ENCODE measurements at regions of chr7 and their contacts with region 1.

Region 1: DNA sequence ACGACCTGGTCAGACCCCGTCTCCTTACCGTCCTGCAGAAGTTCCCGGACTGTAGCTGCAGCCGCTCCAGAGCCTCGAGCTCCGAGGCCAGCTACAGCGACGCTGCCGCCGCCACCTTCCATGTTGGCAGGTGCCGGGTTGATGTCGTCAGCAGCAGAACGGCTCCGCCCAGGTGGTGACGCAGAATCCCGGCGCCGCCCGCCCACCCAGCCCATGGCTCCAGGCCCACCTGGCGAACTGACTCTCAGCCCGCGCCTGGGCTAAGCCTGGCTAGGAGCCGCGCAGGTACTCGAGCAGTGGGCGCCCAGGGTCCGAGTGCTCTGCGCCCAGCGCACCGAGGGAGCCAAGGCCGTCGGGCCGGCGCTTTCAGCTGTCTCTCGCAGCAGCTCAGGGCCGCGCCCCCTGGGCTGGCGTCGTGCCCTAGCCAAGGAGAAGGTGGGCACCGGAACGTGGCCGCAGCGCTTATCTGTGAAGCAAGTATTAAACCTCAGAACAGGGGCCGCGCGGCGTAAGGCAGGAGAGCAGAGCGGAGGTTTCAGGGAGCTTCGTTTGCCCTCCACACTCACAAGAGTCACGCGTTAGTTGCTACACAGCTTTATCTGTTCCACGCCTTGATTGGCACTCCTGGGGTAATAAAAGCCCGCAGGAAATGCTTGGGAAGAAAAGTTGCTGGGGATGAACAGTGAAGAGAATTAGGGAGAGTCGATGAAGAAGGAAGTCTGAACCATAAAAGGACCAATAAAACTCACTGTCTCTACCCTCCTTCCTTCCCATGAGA is at the starts of genes COG5 and DUS4L:
- DNase-seq: peak; percentile 69 to 94 (median 80)
- ATAC-seq: peak; percentile 85
- H3K4me3 ChIP-seq: peak within 1 kb of the TSS; percentile 83
- H3K4me3 Mint-ChIP-seq: peak within 1 kb of the TSS; percentile 93
- H3K27ac ChIP-seq: peak within 1 kb of the TSS; percentile 87 to 90
- H3K27ac Mint-ChIP-seq: peak within 1 kb of the TSS; percentile 94
- H3K4me1 ChIP-seq: peaks cover 35% of the 10 kb centered on the region
- H3K4me1 Mint-ChIP-seq: peaks cover 70% of the 10 kb centered on the region
- H3K27me3 ChIP-seq: no peaks in the 10 kb centered on the region
- H3K27me3 Mint-ChIP-seq: no peaks in the 10 kb centered on the region
- CTCF ChIP-seq: no peak
- total RNA-seq, gene COG5: 43.4 to 44.5 TPM
- total RNA-seq, gene DUS4L: 14.3 to 14.4 TPM

Region 2: GRCh38 chr7:106865130-106866041 is 698.6 kb before region 1 on chr7 and contains the start of gene PIK3CG:
- CTCF ChIA-PET with region 1: no interaction called
- POLR2A ChIA-PET with region 1: interaction called, 4 read pairs
- intact Hi-C with region 1: loop called in 1 of 2 experiments (anchors 10 kb)
- DNase-seq: peak in 5 of 14 experiments; percentile 6 to 86 (median 75)
- ATAC-seq: peak; percentile 94
- H3K4me3 ChIP-seq: peak within 1 kb of the TSS; percentile 62
- H3K4me3 Mint-ChIP-seq: peak within 1 kb of the TSS; percentile 92
- H3K27ac ChIP-seq: peak within 1 kb of the TSS; percentile 77 to 80
- H3K27ac Mint-ChIP-seq: peak within 1 kb of the TSS; percentile 93
- H3K4me1 ChIP-seq: peaks cover 61% of the 10 kb centered on the region
- H3K4me1 Mint-ChIP-seq: peaks cover 82% of the 10 kb centered on the region
- H3K27me3 ChIP-seq: no peaks in the 10 kb centered on the region
- H3K27me3 Mint-ChIP-seq: no peaks in the 10 kb centered on the region
- CTCF ChIP-seq: no peak
- total RNA-seq, gene PIK3CG: 20.8 to 21.2 TPM

Region 3: DNA sequence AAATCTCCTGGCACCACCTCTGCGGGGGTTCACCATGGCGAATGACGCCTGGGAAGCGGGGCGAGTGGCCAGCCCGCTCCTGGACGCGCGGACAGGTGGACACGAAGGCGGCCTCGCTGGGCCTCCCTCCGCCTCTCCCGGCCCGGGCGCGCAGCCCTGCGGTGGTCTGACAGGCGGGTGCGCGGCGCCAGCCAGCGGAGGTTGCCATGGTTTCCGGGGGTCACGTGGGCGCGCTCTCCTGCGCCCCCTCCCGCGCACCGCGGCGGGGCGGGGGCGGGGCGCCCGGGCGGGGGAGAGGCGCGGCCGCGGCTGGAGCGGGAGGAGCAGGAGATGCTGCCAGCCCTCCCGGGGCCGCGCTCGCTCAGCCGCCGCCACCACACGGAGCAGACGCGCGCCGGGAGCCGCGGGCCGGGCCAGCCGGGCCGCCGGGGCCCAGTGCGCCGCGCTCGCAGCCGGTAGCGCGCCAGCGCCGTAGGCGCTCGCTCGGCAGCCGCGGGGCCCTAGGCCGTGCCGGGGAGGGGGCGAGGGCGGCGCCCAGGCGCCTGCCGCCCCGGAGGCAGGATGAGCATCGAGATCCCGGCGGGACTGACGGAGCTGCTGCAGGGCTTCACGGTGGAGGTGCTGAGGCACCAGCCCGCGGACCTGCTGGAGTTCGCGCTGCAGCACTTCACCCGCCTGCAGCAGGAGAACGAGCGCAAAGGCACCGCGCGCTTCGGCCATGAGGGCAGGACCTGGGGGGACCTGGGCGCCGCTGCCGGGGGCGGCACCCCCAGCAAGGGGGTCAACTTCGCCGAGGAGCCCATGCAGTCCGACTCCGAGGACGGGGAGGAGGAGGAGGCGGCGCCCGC is 519.4 kb before region 1 on chr7 and contains the start of gene PRKAR2B:
- CTCF ChIA-PET with region 1: no interaction called
- POLR2A ChIA-PET with region 1: no interaction called
- intact Hi-C with region 1: loop called in 1 of 2 experiments (anchors 10 kb)
- DNase-seq: peak; percentile 56 to 93 (median 71)
- ATAC-seq: peak; percentile 94
- H3K4me3 ChIP-seq: peak within 1 kb of the TSS; percentile 60
- H3K4me3 Mint-ChIP-seq: peak within 1 kb of the TSS; percentile 94
- H3K27ac ChIP-seq: no peak within 1 kb of the TSS
- H3K27ac Mint-ChIP-seq: peak within 1 kb of the TSS; percentile 39
- H3K4me1 ChIP-seq: peaks cover 10% of the 10 kb centered on the region
- H3K4me1 Mint-ChIP-seq: peaks cover 13% of the 10 kb centered on the region
- H3K27me3 ChIP-seq: peaks cover 12 to 30% of the 10 kb centered on the region in 2 experiments
- H3K27me3 Mint-ChIP-seq: peaks cover 43% of the 10 kb centered on the region
- CTCF ChIP-seq: no peak
- total RNA-seq, gene PRKAR2B: 0.41 to 0.42 TPM

Region 4: DNA sequence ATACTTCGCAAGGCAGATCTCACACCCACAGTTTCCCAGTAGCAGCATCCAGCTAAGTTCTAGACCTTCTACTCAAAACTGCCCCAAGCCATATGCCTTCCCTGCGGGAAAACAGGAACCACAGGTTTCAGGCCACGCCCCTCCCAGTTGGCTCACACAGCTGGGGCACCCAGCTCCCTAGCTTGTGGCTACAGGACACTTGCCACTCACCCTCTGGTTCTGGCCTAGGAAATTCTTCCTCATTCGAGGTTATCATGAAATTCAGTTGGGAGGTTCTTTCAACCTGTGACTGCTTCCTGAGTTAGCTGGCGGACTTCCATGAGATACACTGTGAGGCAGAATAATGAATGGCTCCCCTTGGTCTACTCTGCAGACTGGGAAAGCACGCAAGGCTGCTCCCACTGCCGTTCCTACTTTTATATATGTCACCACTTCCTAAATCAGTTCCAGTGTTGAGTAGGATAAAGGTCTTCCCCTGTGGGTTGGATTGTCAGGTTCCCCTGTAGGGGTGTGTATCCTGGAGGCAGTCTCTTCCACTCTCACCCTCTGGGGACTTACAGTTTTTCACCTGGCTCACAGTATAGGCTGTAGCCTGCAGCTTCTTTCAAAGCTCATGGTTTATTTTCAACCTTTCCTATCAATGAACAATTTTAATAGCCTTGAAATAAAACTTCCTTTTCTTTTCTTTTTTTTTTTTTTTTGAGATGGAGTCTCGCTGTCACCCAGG is 57.2 kb before region 1 on chr7:
- CTCF ChIA-PET with region 1: no interaction called
- POLR2A ChIA-PET with region 1: no interaction called
- intact Hi-C with region 1: no loop called
- DNase-seq: no peak
- ATAC-seq: no peak
- H3K4me3 ChIP-seq: no peak overlapping the region
- H3K4me3 Mint-ChIP-seq: no peak overlapping the region
- H3K27ac ChIP-seq: no peak overlapping the region
- H3K27ac Mint-ChIP-seq: no peak overlapping the region
- H3K4me1 ChIP-seq: peaks cover 4% of the 10 kb centered on the region
- H3K4me1 Mint-ChIP-seq: peaks cover 30% of the 10 kb centered on the region
- H3K27me3 ChIP-seq: no peaks in the 10 kb centered on the region
- H3K27me3 Mint-ChIP-seq: no peaks in the 10 kb centered on the region
- CTCF ChIP-seq: no peak

Region 5: GRCh38 chr7:107579885-107580715 is 16.1 kb after region 1 on chr7 and contains the start of gene BCAP29:
- CTCF ChIA-PET with region 1: interaction called, 5 read pairs
- POLR2A ChIA-PET with region 1: interaction called, 18 read pairs
- intact Hi-C with region 1: loop called (anchors 2 kb)
- DNase-seq: peak; percentile 31 to 87 (median 54)
- ATAC-seq: peak; percentile 95
- H3K4me3 ChIP-seq: peak within 1 kb of the TSS; percentile 87
- H3K4me3 Mint-ChIP-seq: peak within 1 kb of the TSS; percentile 93
- H3K27ac ChIP-seq: peak within 1 kb of the TSS; percentile 26 to 50
- H3K27ac Mint-ChIP-seq: peak within 1 kb of the TSS; percentile 79
- H3K4me1 ChIP-seq: peaks cover 7% of the 10 kb centered on the region
- H3K4me1 Mint-ChIP-seq: peaks cover 26% of the 10 kb centered on the region
- H3K27me3 ChIP-seq: no peaks in the 10 kb centered on the region
- H3K27me3 Mint-ChIP-seq: no peaks in the 10 kb centered on the region
- CTCF ChIP-seq: no peak
- total RNA-seq, gene BCAP29: 11.0 to 11.7 TPM

Region 6: GRCh38 chr7:107890962-107891635 is 327.1 kb after region 1 on chr7 and contains the start of gene DLD:
- CTCF ChIA-PET with region 1: interaction called, 3 read pairs
- POLR2A ChIA-PET with region 1: no interaction called
- intact Hi-C with region 1: loop called in 1 of 2 experiments (anchors 5 kb)
- DNase-seq: peak; percentile 84 to 97 (median 90)
- ATAC-seq: peak; percentile 96
- H3K4me3 ChIP-seq: peak within 1 kb of the TSS; percentile 78
- H3K4me3 Mint-ChIP-seq: peak within 1 kb of the TSS; percentile 99
- H3K27ac ChIP-seq: peak within 1 kb of the TSS; percentile 85 to 89
- H3K27ac Mint-ChIP-seq: peak within 1 kb of the TSS; percentile 95
- H3K4me1 ChIP-seq: peaks cover 27% of the 10 kb centered on the region
- H3K4me1 Mint-ChIP-seq: peaks cover 54% of the 10 kb centered on the region
- H3K27me3 ChIP-seq: no peaks in the 10 kb centered on the region
- H3K27me3 Mint-ChIP-seq: no peaks in the 10 kb centered on the region
- CTCF ChIP-seq: no peak
- total RNA-seq, gene DLD: 74.3 to 74.9 TPM

Measured in CD4-positive, alpha-beta T cell (primary cell).